Right cardiac atrium (tissue), 5 donors: ENCODE measurements at regions of chr13 and their contacts with region 1.

Region 1: DNA sequence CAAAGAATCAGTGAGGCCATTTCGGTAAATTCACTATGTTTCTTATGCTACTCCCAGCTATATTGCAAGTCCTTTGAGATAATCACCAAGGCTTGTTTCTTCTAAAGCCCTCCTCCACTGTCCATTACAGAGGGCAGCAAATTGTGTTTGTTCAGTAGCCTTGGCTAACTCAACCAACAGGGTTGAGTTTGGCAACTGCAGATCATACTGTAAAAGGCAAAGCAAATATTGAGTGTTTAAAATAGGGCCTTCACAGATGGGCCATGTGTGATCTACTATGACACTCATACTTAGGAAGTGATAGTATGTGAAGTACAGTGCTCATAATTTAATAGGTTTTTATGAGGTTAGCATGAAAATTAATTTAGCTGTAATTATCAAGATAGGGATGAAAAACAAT is 171.3 kb downstream of the DACH1 start:
- DNase-seq: no peak
- ATAC-seq: no peak
- H3K4me3 ChIP-seq: no peak overlapping the region
- H3K27ac ChIP-seq: no peak overlapping the region
- H3K4me1 ChIP-seq: no peaks in the 10 kb centered on the region
- H3K27me3 ChIP-seq: no peaks in the 10 kb centered on the region

Region 2: GRCh38 chr13:71712988-71713653 is 17.5 kb after region 1 on chr13:
- intact Hi-C with region 1: loop called in 1 of 4 experiments (anchors 2 kb)
- DNase-seq: peak in 1 of 3 donors; percentile 29
- ATAC-seq: peak; percentile 57 to 71
- H3K4me3 ChIP-seq: no peak overlapping the region
- H3K27ac ChIP-seq: no peak overlapping the region
- H3K4me1 ChIP-seq: no peaks in the 10 kb centered on the region
- H3K27me3 ChIP-seq: no peaks in the 10 kb centered on the region